CD4-positive, alpha-beta memory T cell (primary cell): ENCODE measurements at regions of chr2 and their contacts with region 1.

Region 1: DNA sequence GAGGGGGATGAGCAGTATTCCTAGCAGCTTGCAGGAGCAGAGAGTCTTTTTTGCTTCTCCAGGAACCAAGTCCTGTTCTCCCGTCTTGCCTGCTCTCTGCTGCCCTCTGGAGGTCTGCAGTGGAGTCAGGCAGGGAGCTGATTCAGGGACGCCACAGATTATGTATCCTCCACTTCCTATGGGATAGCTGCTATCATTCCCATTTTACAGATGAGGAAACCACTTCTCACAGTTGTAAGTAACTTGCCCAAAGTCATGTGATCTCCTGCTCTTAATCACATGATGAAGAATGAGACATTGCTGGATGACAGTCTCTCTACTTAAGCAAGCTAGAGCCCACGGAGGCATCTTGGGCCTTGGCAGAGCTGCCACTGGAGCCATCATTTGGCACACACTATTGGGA is 8.3 kb downstream of the SLC4A5 start:
- DNase-seq: peak; percentile 65 to 72 (median 69)
- H3K4me3 ChIP-seq: no peak overlapping the region
- H3K4me3 Mint-ChIP-seq: no peak overlapping the region
- H3K27ac ChIP-seq: no peak overlapping the region
- H3K27ac Mint-ChIP-seq: peak overlapping the region in 1 of 7 donors; percentile 37
- H3K4me1 ChIP-seq: peaks cover 15% of the 10 kb centered on the region
- H3K4me1 Mint-ChIP-seq: peaks cover 0 to 7% (median 7%) of the 10 kb centered on the region in 4 donors
- H3K27me3 ChIP-seq: no peaks in the 10 kb centered on the region
- H3K27me3 Mint-ChIP-seq: no peaks in the 10 kb centered on the region

Region 2: DNA sequence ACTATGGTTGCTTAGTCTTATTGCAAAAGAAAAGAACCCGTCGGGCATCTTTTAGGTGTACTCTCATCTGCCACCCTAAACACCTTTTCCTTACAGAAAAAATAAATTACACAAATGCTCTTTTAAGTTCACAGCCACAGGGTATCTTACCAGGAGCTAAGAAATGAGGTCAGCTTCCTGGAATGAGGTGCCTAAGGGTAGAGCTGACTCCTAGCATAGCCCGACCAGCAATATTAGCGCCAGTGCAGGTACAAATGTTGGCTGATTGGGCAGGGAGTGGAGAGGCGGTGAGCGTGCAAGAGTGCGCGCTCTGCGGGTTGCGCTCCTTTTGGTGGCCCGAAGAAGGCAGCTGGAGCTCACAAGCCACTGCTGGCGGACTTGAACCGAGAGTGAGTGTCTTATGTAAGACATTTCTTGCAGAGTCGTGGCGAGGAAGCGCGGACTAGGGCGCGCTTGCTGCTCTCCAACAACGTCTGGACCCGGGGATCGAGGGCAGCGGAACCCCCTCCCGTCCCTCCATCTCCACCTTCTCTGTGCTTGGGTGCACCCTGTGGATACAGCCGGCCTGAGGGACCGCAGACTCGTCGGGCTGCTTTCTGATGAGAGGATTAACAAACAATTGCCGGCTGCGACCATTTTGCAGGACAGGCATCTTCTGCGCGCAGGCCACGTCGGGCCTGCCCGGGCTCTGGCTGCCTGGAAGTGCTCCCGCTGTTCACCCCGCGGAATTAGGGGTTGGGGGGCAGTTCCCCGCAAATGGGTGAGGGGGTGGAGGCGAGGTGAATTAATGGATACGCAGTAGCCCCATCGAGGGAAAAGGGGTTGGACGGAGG is 204.6 kb before region 1 on chr2:
- CTCF ChIA-PET with region 1: no interaction called
- POLR2A ChIA-PET with region 1: no interaction called
- intact Hi-C with region 1: no loop called
- DNase-seq: no peak
- H3K4me3 ChIP-seq: no peak overlapping the region
- H3K4me3 Mint-ChIP-seq: no peak overlapping the region
- H3K27ac ChIP-seq: no peak overlapping the region
- H3K27ac Mint-ChIP-seq: no peak overlapping the region
- H3K4me1 ChIP-seq: no peaks in the 10 kb centered on the region
- H3K4me1 Mint-ChIP-seq: peaks cover 0 to 1% (median 0%) of the 10 kb centered on the region in 4 donors
- H3K27me3 ChIP-seq: no peaks in the 10 kb centered on the region
- H3K27me3 Mint-ChIP-seq: peaks cover 11 to 12% of the 10 kb centered on the region in 2 donors

Region 3: GRCh38 chr2:74250189-74250631 is 84.7 kb before region 1 on chr2:
- CTCF ChIA-PET with region 1: interaction called, 303 read pairs
- POLR2A ChIA-PET with region 1: interaction called, 6 read pairs
- intact Hi-C with region 1: loop called (anchors 1 kb)
- DNase-seq: peak in 4 of 5 donors; percentile 53 to 59 (median 57)
- H3K4me3 ChIP-seq: no peak overlapping the region
- H3K4me3 Mint-ChIP-seq: peak overlapping the region in 1 of 8 donors; percentile 55
- H3K27ac ChIP-seq: no peak overlapping the region
- H3K27ac Mint-ChIP-seq: peak overlapping the region in 3 of 7 donors; percentile 55 to 84 (median 84)
- H3K4me1 ChIP-seq: peaks cover 4% of the 10 kb centered on the region
- H3K4me1 Mint-ChIP-seq: peaks cover 4 to 8% (median 6%) of the 10 kb centered on the region in 4 donors
- H3K27me3 ChIP-seq: no peaks in the 10 kb centered on the region
- H3K27me3 Mint-ChIP-seq: no peaks in the 10 kb centered on the region

Region 4: GRCh38 chr2:74278176-74278575 is 56.8 kb before region 1 on chr2:
- CTCF ChIA-PET with region 1: interaction called, 153 read pairs
- POLR2A ChIA-PET with region 1: no interaction called
- intact Hi-C with region 1: no loop called
- DNase-seq: no peak
- H3K4me3 ChIP-seq: no peak overlapping the region
- H3K4me3 Mint-ChIP-seq: no peak overlapping the region
- H3K27ac ChIP-seq: no peak overlapping the region
- H3K27ac Mint-ChIP-seq: peak overlapping the region in 1 of 7 donors; percentile 2
- H3K4me1 ChIP-seq: no peaks in the 10 kb centered on the region
- H3K4me1 Mint-ChIP-seq: peaks cover 0 to 3% (median 0%) of the 10 kb centered on the region in 4 donors
- H3K27me3 ChIP-seq: no peaks in the 10 kb centered on the region
- H3K27me3 Mint-ChIP-seq: no peaks in the 10 kb centered on the region

Region 5: DNA sequence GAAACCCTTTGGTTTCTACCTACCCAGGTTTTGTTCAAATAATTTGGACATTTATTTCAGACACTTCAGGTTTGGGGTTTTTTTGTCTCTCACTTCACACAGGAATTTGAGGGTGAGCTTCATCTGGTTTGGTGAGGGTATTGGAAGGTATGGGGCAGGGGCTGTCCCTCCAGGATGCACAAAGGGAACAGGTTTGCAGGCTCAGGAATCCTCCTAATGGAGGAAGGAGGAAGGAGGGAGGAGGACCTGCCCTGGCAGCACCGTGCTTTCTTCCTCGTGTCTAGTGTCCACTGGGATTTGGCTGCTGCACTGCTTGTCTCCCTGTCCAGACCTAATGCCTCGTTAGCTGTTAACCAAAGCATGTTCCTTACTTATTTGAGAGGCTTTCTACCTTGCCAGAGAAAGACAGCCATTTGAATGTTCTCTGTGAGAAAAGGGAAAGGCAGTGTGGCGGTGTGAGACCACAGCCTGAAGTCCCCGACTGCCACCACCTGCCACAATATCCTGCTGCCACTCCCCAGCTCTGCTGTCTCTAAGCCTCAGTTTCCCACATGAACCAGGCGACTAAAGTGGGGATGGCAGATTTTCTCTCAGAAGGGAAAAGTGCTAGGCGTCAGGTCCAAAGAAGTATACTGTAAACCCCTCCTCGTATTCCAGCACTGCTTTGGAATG is 10.5 kb after region 1 on chr2:
- CTCF ChIA-PET with region 1: interaction called, 31 read pairs
- POLR2A ChIA-PET with region 1: no interaction called
- intact Hi-C with region 1: no loop called
- DNase-seq: no peak
- H3K4me3 ChIP-seq: no peak overlapping the region
- H3K4me3 Mint-ChIP-seq: no peak overlapping the region
- H3K27ac ChIP-seq: no peak overlapping the region
- H3K27ac Mint-ChIP-seq: peak overlapping the region in 1 of 7 donors; percentile 77
- H3K4me1 ChIP-seq: no peaks in the 10 kb centered on the region
- H3K4me1 Mint-ChIP-seq: no peaks in the 10 kb centered on the region
- H3K27me3 ChIP-seq: no peaks in the 10 kb centered on the region
- H3K27me3 Mint-ChIP-seq: no peaks in the 10 kb centered on the region

Region 6: GRCh38 chr2:74529357-74530238 is 194.7 kb after region 1 on chr2 and contains the starts of genes AUP1 and HTRA2:
- CTCF ChIA-PET with region 1: interaction called, 19 read pairs
- POLR2A ChIA-PET with region 1: no interaction called
- intact Hi-C with region 1: no loop called
- DNase-seq: peak; percentile 83 to 88 (median 86)
- H3K4me3 ChIP-seq: peak within 1 kb of the TSS; percentile 89 to 100
- H3K4me3 Mint-ChIP-seq: peak within 1 kb of the TSS; percentile 92 to 96 (median 94)
- H3K27ac ChIP-seq: peak within 1 kb of the TSS; percentile 84
- H3K27ac Mint-ChIP-seq: peak within 1 kb of the TSS; percentile 87 to 97 (median 94)
- H3K4me1 ChIP-seq: peaks cover 31% of the 10 kb centered on the region
- H3K4me1 Mint-ChIP-seq: peaks cover 19 to 50% (median 40%) of the 10 kb centered on the region in 4 donors
- H3K27me3 ChIP-seq: no peaks in the 10 kb centered on the region
- H3K27me3 Mint-ChIP-seq: no peaks in the 10 kb centered on the region
- total RNA-seq, gene AUP1: 153 to 158 TPM
- total RNA-seq, gene HTRA2: 39.8 to 41.1 TPM